ENCODE measurements at regions of chr3 and their contacts with region 1.

Region 1: GRCh38 chr3:133531981-133532380 is 41.5 kb upstream of the CDV3 start:
- DNase-seq: no peak
- H3K4me3 ChIP-seq: no peak overlapping the region
- H3K4me3 Mint-ChIP-seq: no peak overlapping the region
- H3K27ac Mint-ChIP-seq: peak overlapping the region; percentile 95
- H3K4me1 ChIP-seq: peaks cover 48% of the 10 kb centered on the region
- H3K4me1 Mint-ChIP-seq: peaks cover 52% of the 10 kb centered on the region
- H3K27me3 ChIP-seq: no peaks in the 10 kb centered on the region
- H3K27me3 Mint-ChIP-seq: no peaks in the 10 kb centered on the region
- CTCF ChIP-seq: no peak

Region 2: GRCh38 chr3:133494469-133494868 is 37.5 kb before region 1 on chr3:
- CTCF ChIA-PET with region 1: interaction called, 4 read pairs
- POLR2A ChIA-PET with region 1: no interaction called
- intact Hi-C with region 1: loop called (anchors 2 kb)
- DNase-seq: peak; percentile 70 to 76
- H3K4me3 ChIP-seq: no peak overlapping the region
- H3K4me3 Mint-ChIP-seq: no peak overlapping the region
- H3K27ac Mint-ChIP-seq: no peak overlapping the region
- H3K4me1 ChIP-seq: peaks cover 8% of the 10 kb centered on the region
- H3K4me1 Mint-ChIP-seq: peaks cover 9% of the 10 kb centered on the region
- H3K27me3 ChIP-seq: no peaks in the 10 kb centered on the region
- H3K27me3 Mint-ChIP-seq: no peaks in the 10 kb centered on the region
- CTCF ChIP-seq: peak; percentile 65 to 72

Region 3: GRCh38 chr3:133649486-133650068 is 117.6 kb after region 1 on chr3:
- CTCF ChIA-PET with region 1: no interaction called
- POLR2A ChIA-PET with region 1: no interaction called
- intact Hi-C with region 1: no loop called
- DNase-seq: no peak
- H3K4me3 ChIP-seq: no peak overlapping the region
- H3K4me3 Mint-ChIP-seq: no peak overlapping the region
- H3K27ac Mint-ChIP-seq: no peak overlapping the region
- H3K4me1 ChIP-seq: peaks cover 24% of the 10 kb centered on the region
- H3K4me1 Mint-ChIP-seq: peaks cover 8% of the 10 kb centered on the region
- H3K27me3 ChIP-seq: no peaks in the 10 kb centered on the region
- H3K27me3 Mint-ChIP-seq: no peaks in the 10 kb centered on the region
- CTCF ChIP-seq: no peak

Region 4: DNA sequence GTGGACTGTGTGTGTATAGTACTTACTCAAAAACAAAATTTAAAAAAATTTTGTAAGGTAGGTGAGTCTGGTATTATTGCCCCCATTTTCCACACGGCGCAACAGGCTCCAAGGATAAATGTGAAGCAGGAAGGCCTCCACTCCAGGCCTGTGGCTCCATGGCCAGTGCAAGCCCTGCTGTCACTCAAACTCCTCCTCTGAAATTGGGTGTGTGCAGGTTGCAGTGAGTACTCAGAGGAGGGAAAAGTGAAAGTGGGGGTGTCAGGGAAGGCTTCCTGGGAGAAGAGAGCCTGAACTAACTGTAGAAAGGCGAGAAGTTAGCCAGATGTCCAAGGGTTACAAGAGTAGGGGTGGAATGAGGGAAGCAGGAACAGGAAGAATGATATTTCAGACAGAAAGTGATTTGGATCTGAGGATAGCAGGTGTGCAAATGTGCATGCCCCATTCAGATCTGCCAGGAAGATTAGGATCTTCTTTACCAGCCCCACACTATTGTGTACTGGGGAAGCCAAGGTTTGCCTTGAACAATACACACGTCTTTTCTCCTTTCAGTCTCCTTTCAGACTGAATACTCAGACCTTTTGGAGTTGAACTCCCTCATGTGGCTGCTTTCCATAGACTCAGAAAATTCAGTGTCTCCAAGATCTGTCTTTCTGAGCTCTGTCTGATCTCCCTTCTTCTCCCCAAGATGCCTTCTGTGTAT is 767.4 kb after region 1 on chr3:
- CTCF ChIA-PET with region 1: no interaction called
- POLR2A ChIA-PET with region 1: no interaction called
- intact Hi-C with region 1: no loop called
- DNase-seq: peak in 1 of 2 experiments; percentile 45
- H3K4me3 ChIP-seq: no peak overlapping the region
- H3K4me3 Mint-ChIP-seq: no peak overlapping the region
- H3K27ac Mint-ChIP-seq: no peak overlapping the region
- H3K4me1 ChIP-seq: no peaks in the 10 kb centered on the region
- H3K4me1 Mint-ChIP-seq: peaks cover 6% of the 10 kb centered on the region
- H3K27me3 ChIP-seq: no peaks in the 10 kb centered on the region
- H3K27me3 Mint-ChIP-seq: no peaks in the 10 kb centered on the region
- CTCF ChIP-seq: peak; percentile 39 to 52

Measured in Caco-2 (cell line).